ENCODE measurements at regions of chr22 and their contacts with region 1.

Region 1: GRCh38 chr22:44735540-44736488 is 16.6 kb upstream of the ARHGAP8 start:
- DNase-seq: peak; percentile 67 to 93 (median 82)
- ATAC-seq: peak; percentile 87
- H3K4me3 ChIP-seq: no peak overlapping the region
- H3K4me3 Mint-ChIP-seq: no peak overlapping the region
- H3K27ac ChIP-seq: peak overlapping the region in 1 of 2 experiments; percentile 19
- H3K27ac Mint-ChIP-seq: peak overlapping the region; percentile 67
- H3K4me1 ChIP-seq: no peaks in the 10 kb centered on the region
- H3K4me1 Mint-ChIP-seq: peaks cover 6% of the 10 kb centered on the region
- H3K27me3 ChIP-seq: no peaks in the 10 kb centered on the region
- H3K27me3 Mint-ChIP-seq: no peaks in the 10 kb centered on the region
- CTCF ChIP-seq: peak; percentile 98

Region 2: DNA sequence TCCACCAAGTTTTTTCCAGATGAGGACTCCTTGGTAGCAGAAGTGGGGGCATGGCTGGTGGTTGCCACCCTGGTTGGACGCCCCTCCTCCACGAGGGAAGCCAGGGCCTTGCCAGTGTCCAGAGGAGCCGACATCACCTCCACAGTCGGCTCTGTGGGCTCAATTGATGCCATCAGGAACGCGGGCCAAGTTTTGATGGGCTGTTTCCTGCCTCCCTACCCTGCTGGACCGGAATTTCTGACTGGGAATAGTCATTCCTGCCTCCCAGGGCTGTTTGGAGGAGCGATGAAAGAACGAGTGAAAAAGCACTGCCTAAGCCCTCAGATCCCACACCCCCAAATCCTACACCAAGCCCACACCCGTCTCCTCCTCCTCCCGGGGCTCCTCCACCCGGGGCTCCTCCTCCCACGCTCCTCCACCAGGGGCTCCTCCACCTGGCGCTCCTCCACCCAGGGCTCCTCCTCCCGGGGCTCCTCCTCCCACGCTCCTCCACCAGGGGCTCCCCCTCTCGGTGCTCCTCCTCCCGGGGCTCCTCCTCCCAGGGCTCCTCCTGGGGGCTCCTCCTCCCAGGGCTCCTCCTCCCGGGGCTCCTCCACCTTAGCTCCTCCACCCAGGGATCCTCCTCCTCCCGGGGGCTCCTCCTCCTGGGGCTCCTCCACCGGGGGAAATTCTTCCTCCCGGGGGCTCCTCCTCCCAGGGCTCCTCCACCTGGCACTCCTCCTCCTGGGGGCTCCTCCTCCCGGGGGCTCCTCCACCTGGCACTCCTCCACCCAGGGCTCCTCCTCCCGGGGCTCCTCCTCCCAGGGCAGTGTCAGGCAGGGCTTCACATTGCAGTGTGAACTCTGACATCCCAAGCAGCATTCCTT is 43.8 kb before region 1 on chr22:
- CTCF ChIA-PET with region 1: interaction called, 112 read pairs
- POLR2A ChIA-PET with region 1: no interaction called
- intact Hi-C with region 1: loop called (anchors 1 kb)
- DNase-seq: peak in 1 of 9 experiments; percentile 15
- ATAC-seq: no peak
- H3K4me3 ChIP-seq: no peak overlapping the region
- H3K4me3 Mint-ChIP-seq: no peak overlapping the region
- H3K27ac ChIP-seq: no peak overlapping the region
- H3K27ac Mint-ChIP-seq: no peak overlapping the region
- H3K4me1 ChIP-seq: no peaks in the 10 kb centered on the region
- H3K4me1 Mint-ChIP-seq: peaks cover under 1% of the 10 kb centered on the region
- H3K27me3 ChIP-seq: no peaks in the 10 kb centered on the region
- H3K27me3 Mint-ChIP-seq: no peaks in the 10 kb centered on the region
- CTCF ChIP-seq: no peak

Region 3: GRCh38 chr22:44710474-44711457 is 25.0 kb before region 1 on chr22:
- CTCF ChIA-PET with region 1: interaction called, 14 read pairs
- POLR2A ChIA-PET with region 1: interaction called, 3 read pairs
- intact Hi-C with region 1: no loop called
- DNase-seq: peak in 8 of 9 experiments; percentile 26 to 81 (median 69)
- ATAC-seq: peak; percentile 81
- H3K4me3 ChIP-seq: peak overlapping the region; percentile 37 to 48
- H3K4me3 Mint-ChIP-seq: peak overlapping the region; percentile 84
- H3K27ac ChIP-seq: peak overlapping the region; percentile 44 to 80
- H3K27ac Mint-ChIP-seq: peak overlapping the region; percentile 93
- H3K4me1 ChIP-seq: peaks cover 69% of the 10 kb centered on the region
- H3K4me1 Mint-ChIP-seq: peaks cover 63% of the 10 kb centered on the region
- H3K27me3 ChIP-seq: no peaks in the 10 kb centered on the region
- H3K27me3 Mint-ChIP-seq: no peaks in the 10 kb centered on the region
- CTCF ChIP-seq: no peak

Region 4: GRCh38 chr22:45308391-45309186 is 572.8 kb after region 1 on chr22:
- CTCF ChIA-PET with region 1: no interaction called
- POLR2A ChIA-PET with region 1: no interaction called
- intact Hi-C with region 1: no loop called
- DNase-seq: peak in 4 of 9 experiments; percentile 23 to 61 (median 34)
- ATAC-seq: no peak
- H3K4me3 ChIP-seq: peak overlapping the region; percentile 53 to 93
- H3K4me3 Mint-ChIP-seq: peak overlapping the region; percentile 89
- H3K27ac ChIP-seq: peak overlapping the region; percentile 70 to 86
- H3K27ac Mint-ChIP-seq: peak overlapping the region; percentile 91
- H3K4me1 ChIP-seq: peaks cover 32% of the 10 kb centered on the region
- H3K4me1 Mint-ChIP-seq: peaks cover 36% of the 10 kb centered on the region
- H3K27me3 ChIP-seq: no peaks in the 10 kb centered on the region
- H3K27me3 Mint-ChIP-seq: no peaks in the 10 kb centered on the region
- CTCF ChIP-seq: no peak

Measured in CD8-positive, alpha-beta T cell (primary cell).